Heart right ventricle (tissue), 16 donors: ENCODE measurements at regions of chr20 and their contacts with region 1.

Region 1: GRCh38 chr20:39874049-39874888 is 814.8 kb downstream of the MAFB start:
- DNase-seq: peak; percentile 46 to 88
- ATAC-seq: peak; percentile 53 to 97 (median 95)
- H3K4me3 ChIP-seq: no peak overlapping the region
- H3K27ac ChIP-seq: no peak overlapping the region
- H3K4me1 ChIP-seq: peaks cover 0 to 8% (median 0%) of the 10 kb centered on the region in 9 donors
- H3K27me3 ChIP-seq: peaks cover 0 to 15% (median 5%) of the 10 kb centered on the region in 7 donors
- CTCF ChIP-seq: peak; percentile 62 to 89 (median 85)

Region 2: GRCh38 chr20:39117491-39117890 is 756.8 kb before region 1 on chr20:
- intact Hi-C with region 1: loop called in 5 of 10 experiments (anchors 5 to 10 kb)
- DNase-seq: no peak
- ATAC-seq: peak in 1 of 8 donors; percentile 39
- H3K4me3 ChIP-seq: no peak overlapping the region
- H3K27ac ChIP-seq: no peak overlapping the region
- H3K4me1 ChIP-seq: peaks cover 0 to 2% (median 0%) of the 10 kb centered on the region in 9 donors
- H3K27me3 ChIP-seq: peaks cover 0 to 30% (median 10%) of the 10 kb centered on the region in 7 donors
- CTCF ChIP-seq: no peak

Region 3: GRCh38 chr20:39264506-39265172 is 609.6 kb before region 1 on chr20:
- intact Hi-C with region 1: loop called in 5 of 10 experiments (anchors 2 to 5 kb)
- DNase-seq: peak; percentile 41 to 50
- ATAC-seq: peak; percentile 28 to 79 (median 54)
- H3K4me3 ChIP-seq: no peak overlapping the region
- H3K27ac ChIP-seq: no peak overlapping the region
- H3K4me1 ChIP-seq: peaks cover 0 to 24% (median 0%) of the 10 kb centered on the region in 9 donors
- H3K27me3 ChIP-seq: peaks cover 0 to 8% (median 0%) of the 10 kb centered on the region in 7 donors
- CTCF ChIP-seq: peak; percentile 58 to 92 (median 86)

Region 4: DNA sequence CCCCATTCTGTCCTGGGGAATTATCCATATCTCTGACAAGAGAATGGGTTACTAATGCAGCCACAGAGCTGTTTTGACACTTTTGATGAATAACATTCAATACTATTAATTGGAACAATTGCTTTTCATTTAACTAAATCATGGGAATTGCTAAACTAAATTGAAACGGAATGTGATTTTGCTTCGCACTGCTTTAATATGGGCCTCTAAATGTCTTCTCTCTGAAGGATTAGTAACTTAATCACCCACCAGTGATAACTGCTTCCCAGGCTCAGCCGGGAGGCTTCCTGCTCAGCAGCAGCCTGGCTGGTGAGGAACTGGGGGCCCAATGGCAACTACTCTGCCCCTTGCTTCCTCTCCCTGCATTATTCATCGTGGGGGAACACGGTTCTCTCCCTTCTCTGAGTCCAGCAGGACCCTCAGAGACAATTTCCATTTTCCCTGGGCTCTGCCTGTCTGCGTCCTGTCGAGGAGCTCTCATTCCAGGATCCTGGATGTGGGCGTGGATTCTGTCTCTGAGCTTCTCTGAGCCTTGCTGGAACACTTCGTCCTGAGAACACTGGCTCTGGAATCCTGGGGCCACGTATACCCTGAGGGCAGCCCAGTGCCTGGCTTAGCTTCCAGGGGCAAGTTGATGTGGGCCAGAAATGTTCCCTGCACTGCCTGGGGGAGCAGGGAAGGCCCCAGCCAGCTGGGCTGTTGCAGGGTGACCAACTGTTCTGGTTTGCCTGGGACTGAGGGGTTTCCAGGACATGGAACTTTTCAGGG is 603.2 kb before region 1 on chr20:
- intact Hi-C with region 1: loop called in 8 of 10 experiments (anchors 2 to 10 kb)
- DNase-seq: peak in 1 of 2 donors; percentile 18
- ATAC-seq: peak in 5 of 8 donors; percentile 17 to 77 (median 37)
- H3K4me3 ChIP-seq: no peak overlapping the region
- H3K27ac ChIP-seq: peak overlapping the region in 4 of 10 donors; percentile 10 to 64 (median 46)
- H3K4me1 ChIP-seq: peaks cover 0 to 36% (median 0%) of the 10 kb centered on the region in 9 donors
- H3K27me3 ChIP-seq: peaks cover 0 to 10% (median 0%) of the 10 kb centered on the region in 7 donors
- CTCF ChIP-seq: no peak

Region 5: DNA sequence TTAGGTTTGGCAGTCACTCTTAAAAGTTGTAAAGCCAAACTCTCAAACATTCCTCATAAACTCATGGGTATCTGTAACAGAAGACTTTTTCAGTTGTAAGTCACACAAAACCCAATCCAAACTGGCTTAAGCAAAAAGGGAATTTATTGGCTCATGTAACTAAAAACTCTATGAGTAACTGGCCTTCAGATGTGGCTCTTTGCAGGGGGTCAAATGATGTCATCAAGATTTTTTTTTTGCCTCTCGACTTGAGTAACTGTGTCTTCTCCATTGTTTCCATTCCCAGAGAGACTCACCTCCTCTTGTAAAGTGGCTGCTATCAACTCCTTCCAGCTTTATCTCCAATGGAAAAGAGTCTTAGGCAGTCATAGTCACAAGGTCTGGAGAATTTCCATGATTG is 267.1 kb before region 1 on chr20:
- intact Hi-C with region 1: no loop called
- DNase-seq: no peak
- ATAC-seq: no peak
- H3K4me3 ChIP-seq: no peak overlapping the region
- H3K27ac ChIP-seq: no peak overlapping the region
- H3K4me1 ChIP-seq: no peaks in the 10 kb centered on the region
- H3K27me3 ChIP-seq: peaks cover 0 to 26% (median 0%) of the 10 kb centered on the region in 7 donors
- CTCF ChIP-seq: no peak